Motor neuron (in vitro differentiated cells): ENCODE measurements at regions of chr18 and their contacts with region 1.

Region 1: GRCh38 chr18:31741097-31741735 is 19.5 kb downstream of the SLC25A52 start:
- ATAC-seq: peak in 2 of 8 experiments; percentile 24 to 38
- H3K4me3 ChIP-seq: no peak overlapping the region
- H3K27ac ChIP-seq: no peak overlapping the region
- H3K4me1 ChIP-seq: peaks cover 0 to 4% of the 10 kb centered on the region in 2 donors

Region 2: DNA sequence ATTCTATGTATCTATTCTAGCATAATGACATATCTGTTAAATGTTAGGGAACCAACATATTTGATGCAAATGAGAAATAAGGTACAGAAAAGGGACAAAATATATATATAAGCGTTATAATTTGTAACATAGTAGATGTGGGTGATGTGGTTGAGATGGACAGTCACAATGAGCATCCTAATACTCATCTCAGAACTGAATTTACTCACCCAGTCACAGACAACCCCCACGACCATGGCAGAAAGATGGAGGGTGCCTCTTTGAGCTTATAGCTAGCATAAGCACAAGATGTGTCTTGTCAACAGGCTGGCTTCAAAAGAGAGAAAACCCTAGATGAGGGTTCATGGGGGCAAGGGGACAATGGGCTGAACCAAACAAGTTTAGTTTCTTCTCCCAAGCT is 302.8 kb before region 1 on chr18:
- in situ Hi-C with region 1: no loop called
- ATAC-seq: no peak
- H3K4me3 ChIP-seq: no peak overlapping the region
- H3K27ac ChIP-seq: no peak overlapping the region
- H3K4me1 ChIP-seq: no peaks in the 10 kb centered on the region

Region 3: DNA sequence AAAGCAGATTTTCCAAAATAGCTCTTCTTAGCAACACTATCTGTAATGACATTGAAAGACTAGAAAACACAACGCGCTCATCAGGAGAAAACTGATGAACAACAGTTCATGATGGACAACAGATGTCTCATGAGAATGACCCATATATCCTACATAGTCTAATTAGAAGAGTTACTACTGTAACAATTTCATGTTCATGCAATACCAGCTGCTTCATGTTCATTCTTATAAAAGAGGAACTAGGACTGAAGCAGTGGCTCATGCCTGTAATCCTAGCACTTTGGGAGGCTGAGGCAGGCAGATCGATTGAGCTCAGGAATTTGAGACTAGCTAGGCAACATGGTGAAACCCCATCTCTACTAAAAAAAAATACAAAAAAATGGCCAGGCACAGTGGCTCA is 179.1 kb after region 1 on chr18:
- in situ Hi-C with region 1: no loop called
- ATAC-seq: no peak
- H3K4me3 ChIP-seq: no peak overlapping the region
- H3K27ac ChIP-seq: no peak overlapping the region
- H3K4me1 ChIP-seq: no peaks in the 10 kb centered on the region

Region 4: DNA sequence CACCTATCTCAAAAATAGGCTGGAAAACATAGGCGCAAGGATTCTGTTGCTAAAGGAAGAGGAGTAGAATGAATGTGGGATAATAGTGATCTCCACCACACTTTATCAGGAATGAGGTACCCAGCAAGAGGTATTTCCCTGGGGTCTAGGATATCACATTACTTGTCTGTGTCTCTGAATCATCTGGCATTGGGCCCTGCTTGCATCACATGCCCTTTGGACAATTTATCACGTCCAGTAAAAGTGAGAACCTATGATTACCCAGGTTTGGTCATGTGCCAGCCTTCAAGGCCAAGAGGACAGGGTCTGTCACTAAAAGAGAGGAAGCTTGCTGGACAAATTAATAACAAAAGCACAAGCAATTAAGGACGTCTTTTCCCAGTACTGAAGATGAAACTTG is 213.1 kb after region 1 on chr18:
- in situ Hi-C with region 1: loop called in 1 of 9 experiments (anchors 25 kb)
- ATAC-seq: peak in 5 of 8 experiments; percentile 32 to 63 (median 50)
- H3K4me3 ChIP-seq: no peak overlapping the region
- H3K27ac ChIP-seq: no peak overlapping the region
- H3K4me1 ChIP-seq: no peaks in the 10 kb centered on the region